Gastrocnemius medialis (tissue), 4 donors: ENCODE measurements at regions of chr2 and their contacts with region 1.

Region 1: DNA sequence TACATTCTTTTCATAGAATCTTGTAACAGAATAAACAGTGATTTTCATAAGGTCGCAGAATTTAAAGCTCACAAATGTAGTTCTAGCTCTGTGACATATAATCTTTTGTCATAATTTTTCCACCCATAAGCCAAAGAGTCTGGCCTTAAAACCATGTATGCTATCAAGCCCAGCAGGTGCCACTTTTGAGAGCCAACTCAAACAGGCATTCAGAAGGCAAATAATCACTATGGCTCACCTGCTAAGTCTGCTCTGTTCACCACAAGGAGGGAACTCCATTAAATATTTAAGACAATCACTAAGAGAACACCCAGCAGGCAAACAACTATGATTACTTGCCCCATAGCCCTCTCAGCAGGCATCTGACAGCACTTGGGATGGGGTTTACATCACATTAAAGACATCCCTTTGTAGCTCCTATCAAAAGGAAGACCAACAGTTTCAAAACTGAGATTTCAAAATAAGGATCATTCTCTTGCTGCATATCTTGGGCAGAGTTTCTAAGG is 241.6 kb downstream of the PDE11A start:
- DNase-seq: no peak
- ATAC-seq: no peak
- H3K4me3 ChIP-seq: no peak overlapping the region
- H3K27ac ChIP-seq: no peak overlapping the region
- H3K4me1 ChIP-seq: no peaks in the 10 kb centered on the region
- H3K27me3 ChIP-seq: no peaks in the 10 kb centered on the region
- CTCF ChIP-seq: no peak
- POLR2A ChIP-seq: no peak

Region 2: DNA sequence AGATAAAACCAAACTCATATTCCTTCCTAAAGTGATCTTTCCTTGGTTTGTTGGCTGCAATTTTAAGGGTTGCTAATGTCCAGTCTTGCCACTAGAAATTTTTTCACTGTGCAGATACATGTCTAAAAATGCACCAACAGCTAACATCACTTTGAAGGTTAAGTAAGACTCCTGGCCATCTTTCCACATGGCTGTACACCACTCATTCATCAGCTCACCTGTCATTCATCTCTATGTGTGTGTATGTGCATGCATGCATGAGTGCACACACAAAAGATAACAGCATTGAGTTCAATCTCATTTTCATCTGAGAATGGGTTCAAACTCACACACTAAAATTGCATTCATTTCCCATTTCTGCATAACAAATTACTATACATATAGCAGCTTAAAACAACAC is 37.9 kb after region 1 on chr2:
- in situ Hi-C with region 1: no loop called
- intact Hi-C with region 1: loop called (anchors 1 kb)
- DNase-seq: no peak
- ATAC-seq: no peak
- H3K4me3 ChIP-seq: no peak overlapping the region
- H3K27ac ChIP-seq: peak overlapping the region in 2 of 4 donors; percentile 57 to 81
- H3K4me1 ChIP-seq: peaks cover 6 to 28% of the 10 kb centered on the region in 2 donors
- H3K27me3 ChIP-seq: no peaks in the 10 kb centered on the region
- CTCF ChIP-seq: no peak
- POLR2A ChIP-seq: no peak